ENCODE measurements at regions of chr10 and their contacts with region 1.

Region 1: GRCh38 chr10:62816331-62817120 is at the start of gene EGR2:
- DNase-seq: peak; percentile 90 to 98 (median 95)
- ATAC-seq: peak; percentile 82
- H3K4me3 ChIP-seq: peak within 1 kb of the TSS; percentile 74 to 85
- H3K4me3 Mint-ChIP-seq: peak within 1 kb of the TSS; percentile 98
- H3K27ac ChIP-seq: peak within 1 kb of the TSS; percentile 73 to 80
- H3K27ac Mint-ChIP-seq: peak within 1 kb of the TSS; percentile 98
- H3K4me1 ChIP-seq: peaks cover 35% of the 10 kb centered on the region
- H3K4me1 Mint-ChIP-seq: peaks cover 45% of the 10 kb centered on the region
- H3K27me3 ChIP-seq: peaks cover 6 to 10% of the 10 kb centered on the region in 2 experiments
- H3K27me3 Mint-ChIP-seq: peaks cover 27% of the 10 kb centered on the region
- CTCF ChIP-seq: no peak
- total RNA-seq, gene EGR2: 5.6 to 6.1 TPM

Region 2: DNA sequence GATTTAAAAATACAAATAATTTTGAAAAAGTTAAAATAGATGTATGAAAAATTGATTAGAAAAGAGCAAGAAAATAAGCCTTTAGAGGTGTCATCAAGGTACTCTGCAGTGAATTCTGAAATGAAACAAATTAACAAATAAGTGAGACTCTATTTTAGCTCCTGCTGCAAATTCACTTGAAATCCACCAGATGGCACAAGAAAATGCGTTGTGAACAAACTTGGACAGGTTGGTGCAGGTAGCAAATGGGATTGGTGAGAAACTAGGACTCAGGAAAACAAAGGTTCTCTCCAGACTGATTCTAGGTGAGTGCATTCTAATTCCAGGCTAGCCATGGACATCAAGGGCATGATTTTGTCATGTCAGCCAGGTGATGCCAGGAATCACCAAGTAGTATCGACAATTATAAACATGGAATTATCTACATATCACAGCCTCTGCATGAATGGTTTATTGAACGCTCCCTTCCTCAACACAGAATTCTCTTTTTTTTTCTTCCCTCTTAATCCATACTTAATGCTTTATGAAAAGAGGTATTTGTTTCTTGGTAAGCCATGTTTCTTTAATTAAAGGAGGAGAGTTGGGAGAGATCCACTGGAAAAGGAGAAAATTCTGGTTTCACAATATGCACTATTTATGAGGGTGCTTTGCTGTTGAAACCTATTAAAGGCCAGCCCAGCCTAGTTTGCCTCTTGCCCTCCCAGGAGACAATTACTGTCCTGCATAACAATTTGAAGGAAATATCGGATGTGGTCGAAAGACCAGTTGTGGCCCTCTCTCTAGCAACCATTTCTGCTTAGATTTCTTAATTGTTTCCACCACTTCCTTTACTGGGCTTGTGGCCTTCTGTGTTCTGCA is 324.3 kb before region 1 on chr10:
- CTCF ChIA-PET with region 1: interaction called, 4 read pairs
- POLR2A ChIA-PET with region 1: no interaction called
- intact Hi-C with region 1: loop called (anchors 2 kb)
- DNase-seq: peak in 3 of 9 experiments; percentile 5 to 56 (median 31)
- ATAC-seq: peak; percentile 57
- H3K4me3 ChIP-seq: no peak overlapping the region
- H3K4me3 Mint-ChIP-seq: no peak overlapping the region
- H3K27ac ChIP-seq: no peak overlapping the region
- H3K27ac Mint-ChIP-seq: no peak overlapping the region
- H3K4me1 ChIP-seq: no peaks in the 10 kb centered on the region
- H3K4me1 Mint-ChIP-seq: peaks cover 5% of the 10 kb centered on the region
- H3K27me3 ChIP-seq: no peaks in the 10 kb centered on the region
- H3K27me3 Mint-ChIP-seq: peaks cover 5% of the 10 kb centered on the region
- CTCF ChIP-seq: peak; percentile 55

Region 3: GRCh38 chr10:62610649-62611229 is 205.8 kb before region 1 on chr10:
- CTCF ChIA-PET with region 1: interaction called, 98 read pairs
- POLR2A ChIA-PET with region 1: interaction called, 7 read pairs
- intact Hi-C with region 1: loop called (anchors 1 kb)
- DNase-seq: peak; percentile 48 to 84 (median 70)
- ATAC-seq: peak; percentile 97
- H3K4me3 ChIP-seq: no peak overlapping the region
- H3K4me3 Mint-ChIP-seq: no peak overlapping the region
- H3K27ac ChIP-seq: no peak overlapping the region
- H3K27ac Mint-ChIP-seq: no peak overlapping the region
- H3K4me1 ChIP-seq: no peaks in the 10 kb centered on the region
- H3K4me1 Mint-ChIP-seq: peaks cover 3% of the 10 kb centered on the region
- H3K27me3 ChIP-seq: no peaks in the 10 kb centered on the region
- H3K27me3 Mint-ChIP-seq: no peaks in the 10 kb centered on the region
- CTCF ChIP-seq: peak; percentile 89

Region 4: GRCh38 chr10:62779487-62780248 is 36.9 kb before region 1 on chr10:
- CTCF ChIA-PET with region 1: interaction called, 7 read pairs
- POLR2A ChIA-PET with region 1: interaction called, 4 read pairs
- intact Hi-C with region 1: loop called (anchors 1 to 2 kb)
- DNase-seq: peak; percentile 63 to 97 (median 84)
- ATAC-seq: peak; percentile 96
- H3K4me3 ChIP-seq: no peak overlapping the region
- H3K4me3 Mint-ChIP-seq: peak overlapping the region; percentile 12
- H3K27ac ChIP-seq: no peak overlapping the region
- H3K27ac Mint-ChIP-seq: peak overlapping the region; percentile 81
- H3K4me1 ChIP-seq: peaks cover 12% of the 10 kb centered on the region
- H3K4me1 Mint-ChIP-seq: peaks cover 18% of the 10 kb centered on the region
- H3K27me3 ChIP-seq: no peaks in the 10 kb centered on the region
- H3K27me3 Mint-ChIP-seq: no peaks in the 10 kb centered on the region
- CTCF ChIP-seq: no peak

Region 5: DNA sequence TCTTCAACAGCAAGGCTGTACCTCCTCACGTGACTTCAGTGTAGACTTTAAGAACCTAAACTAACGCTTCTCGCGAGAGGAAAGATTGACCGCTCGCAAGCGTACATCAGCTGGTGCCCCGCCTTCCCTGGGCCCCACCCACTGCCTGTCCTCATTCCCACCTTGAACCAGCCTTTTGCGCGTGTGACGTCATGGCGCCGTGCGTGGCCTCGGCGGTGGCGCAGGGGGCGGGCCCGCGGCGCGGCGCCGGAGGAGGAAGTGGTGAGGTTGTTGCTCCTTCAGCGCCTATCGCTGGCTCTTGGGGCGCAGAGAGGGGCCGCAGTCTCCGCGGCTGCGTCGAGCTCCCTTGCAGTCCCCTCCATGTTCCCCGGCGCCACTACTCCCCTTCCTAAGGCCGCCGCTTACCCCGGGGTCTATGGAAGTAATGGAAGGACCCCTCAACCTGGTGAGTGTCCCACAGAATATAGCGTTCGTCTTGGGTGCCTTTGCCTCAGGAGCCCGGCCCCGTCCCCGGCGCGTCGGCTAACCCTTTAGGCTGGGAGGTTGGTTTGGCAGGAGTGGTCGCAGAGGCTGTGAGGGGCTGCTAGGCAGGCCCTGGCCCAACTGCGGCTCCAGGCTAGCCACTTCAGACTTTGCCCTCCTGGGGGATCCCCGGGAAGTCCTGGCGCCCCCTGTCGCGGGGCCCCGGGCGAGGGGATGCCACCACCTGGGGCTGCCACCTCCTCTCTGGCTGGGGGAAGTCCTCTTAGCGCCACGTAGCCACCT is 316.7 kb after region 1 on chr10 and contains the start of gene NRBF2:
- CTCF ChIA-PET with region 1: interaction called, 3 read pairs
- POLR2A ChIA-PET with region 1: interaction called, 9 read pairs
- intact Hi-C with region 1: loop called (anchors 1 kb)
- DNase-seq: peak; percentile 94 to 99 (median 97)
- ATAC-seq: peak; percentile 91
- H3K4me3 ChIP-seq: peak within 1 kb of the TSS; percentile 96 to 97
- H3K4me3 Mint-ChIP-seq: peak within 1 kb of the TSS; percentile 91
- H3K27ac ChIP-seq: peak within 1 kb of the TSS; percentile 96 to 98
- H3K27ac Mint-ChIP-seq: peak within 1 kb of the TSS; percentile 97
- H3K4me1 ChIP-seq: peaks cover 41% of the 10 kb centered on the region
- H3K4me1 Mint-ChIP-seq: peaks cover 37% of the 10 kb centered on the region
- H3K27me3 ChIP-seq: no peaks in the 10 kb centered on the region
- H3K27me3 Mint-ChIP-seq: peaks cover 5% of the 10 kb centered on the region
- CTCF ChIP-seq: peak; percentile 22
- total RNA-seq, gene NRBF2: 26.6 to 29.1 TPM